Activated CD8-positive, alpha-beta T cell treated with anti-CD3 and anti-CD28 coated beads, Interleukin-2, amount 10 ng/mL, durations not matched to agents 7 days and 5 days (primary cell): ENCODE measurements at regions of chr4 and their contacts with region 1.

Region 1: DNA sequence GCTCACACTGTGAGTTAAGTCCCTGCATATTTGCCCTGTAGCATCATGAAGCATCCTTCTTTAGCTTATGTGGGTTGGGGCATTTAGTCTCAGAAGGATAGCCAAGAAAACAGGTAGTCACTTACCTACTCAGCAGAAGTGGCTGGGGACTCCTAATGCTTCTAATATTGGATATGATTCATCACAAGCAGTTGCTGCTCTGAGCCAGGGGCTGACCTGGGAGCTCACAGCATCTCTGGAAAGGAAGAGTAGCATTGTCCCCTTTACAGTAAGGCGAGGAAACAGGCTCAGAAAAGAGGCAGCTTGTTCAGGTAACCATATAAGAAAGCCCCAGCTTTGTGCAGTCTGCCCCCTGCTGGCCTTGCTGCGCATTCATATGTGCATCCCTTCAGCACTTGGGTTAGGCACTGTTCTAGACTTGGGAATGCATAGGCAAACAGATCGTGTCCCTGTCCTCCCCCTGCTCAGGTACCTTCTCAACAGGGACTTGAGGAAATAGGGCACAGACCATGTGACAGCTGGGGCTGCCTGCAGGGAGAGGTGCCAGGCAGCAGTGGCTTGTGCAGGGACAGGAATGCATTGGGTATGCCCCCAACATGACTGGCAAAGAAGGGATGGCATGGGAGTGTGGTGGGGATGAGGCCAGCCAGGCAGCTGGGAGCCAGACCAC is 35.7 kb upstream of the TBC1D14 start:
- DNase-seq: peak; percentile 85
- ATAC-seq: peak; percentile 85
- H3K4me3 Mint-ChIP-seq: no peak overlapping the region
- H3K27ac Mint-ChIP-seq: no peak overlapping the region
- H3K4me1 Mint-ChIP-seq: peaks cover 12% of the 10 kb centered on the region
- H3K27me3 Mint-ChIP-seq: no peaks in the 10 kb centered on the region

Region 2: DNA sequence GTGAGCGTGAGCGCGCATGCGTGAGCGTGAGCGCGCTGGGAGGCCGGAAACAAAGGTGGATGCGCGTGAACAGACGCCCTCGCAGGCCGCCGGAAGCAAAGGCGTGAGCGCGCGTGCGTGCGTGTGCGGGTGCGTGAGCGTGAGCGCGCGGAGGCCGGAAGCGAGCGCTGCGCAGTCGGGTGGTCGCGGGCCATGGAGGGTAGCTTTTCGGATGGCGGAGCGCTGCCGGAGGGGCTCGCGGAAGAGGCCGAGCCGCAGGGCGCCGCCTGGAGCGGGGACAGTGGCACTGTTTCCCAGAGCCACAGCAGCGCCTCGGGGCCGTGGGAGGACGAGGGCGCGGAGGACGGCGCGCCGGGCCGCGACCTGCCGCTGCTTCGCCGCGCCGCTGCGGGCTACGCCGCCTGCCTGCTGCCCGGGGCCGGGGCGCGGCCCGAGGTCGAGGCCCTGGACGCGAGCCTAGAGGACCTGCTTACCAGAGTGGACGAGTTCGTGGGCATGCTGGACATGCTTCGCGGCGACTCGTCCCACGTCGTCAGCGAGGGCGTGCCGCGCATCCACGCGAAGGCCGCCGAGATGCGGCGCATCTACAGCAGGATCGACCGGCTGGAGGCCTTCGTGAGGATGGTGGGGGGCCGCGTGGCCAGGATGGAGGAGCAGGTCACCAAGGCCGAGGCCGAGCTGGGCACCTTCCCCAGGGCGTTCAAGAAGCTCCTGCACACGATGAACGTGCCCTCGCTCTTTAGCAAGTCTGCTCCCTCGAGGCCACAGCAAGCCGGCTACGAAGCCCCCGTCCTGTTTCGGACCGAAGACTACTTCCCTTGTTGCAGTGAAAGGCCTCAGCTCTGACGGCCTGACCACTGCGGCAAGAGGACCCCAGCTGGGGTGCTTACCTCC is 157.7 kb before region 1 on chr4 and contains the start of gene BLOC1S4:
- CTCF ChIA-PET with region 1: interaction called, 202 read pairs
- POLR2A ChIA-PET with region 1: interaction called, 10 read pairs
- DNase-seq: peak; percentile 92
- ATAC-seq: peak; percentile 83
- H3K4me3 Mint-ChIP-seq: peak within 1 kb of the TSS; percentile 91
- H3K27ac Mint-ChIP-seq: peak within 1 kb of the TSS; percentile 97
- H3K4me1 Mint-ChIP-seq: peaks cover 35% of the 10 kb centered on the region
- H3K27me3 Mint-ChIP-seq: no peaks in the 10 kb centered on the region
- total RNA-seq, gene BLOC1S4: 19.6 to 21.5 TPM

Region 3: DNA sequence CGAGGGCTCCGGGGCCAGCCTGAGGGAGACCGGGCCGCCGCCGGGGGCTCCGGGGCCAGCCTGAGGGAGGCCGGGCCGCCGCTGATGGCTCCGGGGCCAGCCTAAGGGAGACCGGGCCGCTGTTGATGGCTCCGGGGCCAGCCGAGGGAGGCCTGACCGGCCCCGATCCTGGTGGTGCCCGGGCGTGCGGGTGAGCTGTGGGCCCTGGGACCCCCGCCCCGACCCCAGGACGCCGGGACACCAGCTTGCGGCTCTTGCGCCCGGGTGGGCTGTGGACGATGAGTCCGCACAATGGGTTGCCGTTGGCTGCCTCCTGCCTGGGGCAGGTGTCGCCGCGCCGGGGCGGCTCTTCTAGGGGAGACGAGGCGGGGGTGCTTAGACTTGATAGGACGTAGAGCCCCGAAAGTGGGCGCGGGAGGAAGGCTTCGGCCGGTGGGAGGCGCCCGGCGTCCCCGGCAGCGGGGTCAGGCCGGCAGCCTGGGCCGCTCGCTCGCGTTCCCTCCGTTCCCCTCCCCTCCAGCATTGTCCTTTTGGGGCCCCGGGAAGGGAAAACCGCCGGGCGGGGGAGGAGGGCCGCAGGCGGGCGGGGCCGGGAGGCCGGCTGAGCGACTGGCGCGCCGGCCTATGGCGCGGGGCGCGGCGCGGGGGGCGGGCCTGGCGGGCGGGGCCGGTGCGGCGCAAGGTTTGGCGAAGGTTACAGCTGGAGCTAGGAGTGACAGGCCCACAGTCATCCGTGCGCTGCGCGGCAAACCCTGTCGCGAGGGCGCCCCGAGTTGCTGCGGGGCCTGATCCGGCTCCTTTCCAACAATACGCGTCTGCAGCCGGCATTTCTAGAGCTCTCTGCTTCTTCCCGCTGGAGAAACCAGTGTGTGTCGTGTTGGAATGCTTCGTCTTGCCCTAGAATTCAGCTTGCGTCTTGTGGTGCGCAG is 90.6 kb before region 1 on chr4:
- CTCF ChIA-PET with region 1: interaction called, 29 read pairs
- POLR2A ChIA-PET with region 1: interaction called, 5 read pairs
- DNase-seq: peak; percentile 91
- ATAC-seq: peak; percentile 84
- H3K4me3 Mint-ChIP-seq: peak overlapping the region; percentile 84
- H3K27ac Mint-ChIP-seq: peak overlapping the region; percentile 78
- H3K4me1 Mint-ChIP-seq: peaks cover 67% of the 10 kb centered on the region
- H3K27me3 Mint-ChIP-seq: no peaks in the 10 kb centered on the region

Region 4: GRCh38 chr4:6852587-6852986 is 21.3 kb before region 1 on chr4:
- CTCF ChIA-PET with region 1: interaction called, 11 read pairs
- POLR2A ChIA-PET with region 1: no interaction called
- DNase-seq: no peak
- ATAC-seq: no peak
- H3K4me3 Mint-ChIP-seq: no peak overlapping the region
- H3K27ac Mint-ChIP-seq: no peak overlapping the region
- H3K4me1 Mint-ChIP-seq: peaks cover 27% of the 10 kb centered on the region
- H3K27me3 Mint-ChIP-seq: no peaks in the 10 kb centered on the region

Region 5: GRCh38 chr4:6892190-6892908 is 18.4 kb after region 1 on chr4:
- CTCF ChIA-PET with region 1: interaction called, 22 read pairs
- POLR2A ChIA-PET with region 1: interaction called, 3 read pairs
- DNase-seq: peak; percentile 76
- ATAC-seq: peak; percentile 85
- H3K4me3 Mint-ChIP-seq: peak overlapping the region; percentile 48
- H3K27ac Mint-ChIP-seq: peak overlapping the region; percentile 92
- H3K4me1 Mint-ChIP-seq: peaks cover 42% of the 10 kb centered on the region
- H3K27me3 Mint-ChIP-seq: no peaks in the 10 kb centered on the region